Endothelial cell of umbilical vein (primary cell): ENCODE measurements at regions of chr4 and their contacts with region 1.

Region 1: DNA sequence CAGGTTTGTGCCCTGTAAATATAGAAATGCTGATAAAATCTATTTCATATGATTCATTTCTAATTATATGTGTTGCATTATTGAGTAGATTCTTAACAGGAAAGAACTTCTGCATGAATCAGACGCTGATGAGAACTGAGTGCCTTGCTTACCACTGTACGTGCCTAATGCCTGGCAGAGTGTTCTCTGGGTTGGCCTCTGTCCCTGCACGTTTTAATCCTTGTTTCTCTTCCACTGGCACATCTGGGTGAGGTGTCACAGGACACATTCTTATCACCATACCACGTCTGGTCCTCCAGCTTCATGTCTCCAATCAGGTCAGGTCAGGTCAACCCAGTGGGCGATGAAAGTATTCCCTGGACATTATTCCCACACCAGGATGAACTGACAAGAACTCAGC is 53.6 kb downstream of the KLF3 start:
- DNase-seq: peak; percentile 67
- H3K4me3 ChIP-seq: peak overlapping the region in 1 of 3 experiments; percentile 3
- H3K27ac ChIP-seq: peak overlapping the region; percentile 76
- H3K4me1 ChIP-seq: peaks cover 9% of the 10 kb centered on the region
- H3K27me3 ChIP-seq: no peaks in the 10 kb centered on the region
- CTCF ChIP-seq: no peak
- POLR2A ChIP-seq: no peak

Region 2: GRCh38 chr4:38696697-38697096 is 20.9 kb before region 1 on chr4:
- CTCF ChIA-PET with region 1: no interaction called
- POLR2A ChIA-PET with region 1: no interaction called
- dilution Hi-C with region 1: no loop called
- intact Hi-C with region 1: loop called (anchors 2 kb)
- DNase-seq: no peak
- H3K4me3 ChIP-seq: no peak overlapping the region
- H3K27ac ChIP-seq: no peak overlapping the region
- H3K4me1 ChIP-seq: peaks cover 28% of the 10 kb centered on the region
- H3K27me3 ChIP-seq: no peaks in the 10 kb centered on the region
- CTCF ChIP-seq: no peak
- POLR2A ChIP-seq: no peak